ENCODE measurements at regions of chr2 and their contacts with region 1.

Region 1: DNA sequence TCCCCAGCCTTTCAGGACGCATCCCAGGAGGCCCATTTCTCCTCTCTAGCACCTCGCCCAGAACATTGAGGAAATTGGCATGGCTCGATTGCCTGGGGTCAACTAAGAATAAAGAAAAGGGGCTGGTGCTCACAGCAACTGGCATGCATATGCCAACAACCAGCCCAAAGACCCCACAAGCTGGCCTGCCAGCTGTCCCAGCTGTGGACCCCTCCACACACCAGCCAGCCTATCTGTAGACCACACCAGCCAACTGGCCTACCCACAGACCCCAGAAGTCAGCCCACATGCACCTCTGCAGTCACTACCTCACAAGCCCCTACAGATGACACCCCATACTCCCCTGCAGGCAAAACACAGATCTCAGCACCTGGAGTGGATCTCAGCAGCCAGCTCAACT is 123.8 kb upstream of the ID2 start:
- DNase-seq: no peak
- ATAC-seq: no peak
- H3K4me3 ChIP-seq: no peak overlapping the region
- H3K4me3 Mint-ChIP-seq: no peak overlapping the region
- H3K27ac ChIP-seq: no peak overlapping the region
- H3K27ac Mint-ChIP-seq: no peak overlapping the region
- H3K4me1 ChIP-seq: no peaks in the 10 kb centered on the region
- H3K4me1 Mint-ChIP-seq: no peaks in the 10 kb centered on the region
- H3K27me3 ChIP-seq: no peaks in the 10 kb centered on the region
- H3K27me3 Mint-ChIP-seq: no peaks in the 10 kb centered on the region
- CTCF ChIP-seq: no peak

Region 2: GRCh38 chr2:8573456-8574143 is 15.5 kb after region 1 on chr2:
- CTCF ChIA-PET with region 1: no interaction called
- POLR2A ChIA-PET with region 1: no interaction called
- intact Hi-C with region 1: no loop called
- DNase-seq: peak in 1 of 9 experiments; percentile 47
- ATAC-seq: no peak
- H3K4me3 ChIP-seq: no peak overlapping the region
- H3K4me3 Mint-ChIP-seq: no peak overlapping the region
- H3K27ac ChIP-seq: no peak overlapping the region
- H3K27ac Mint-ChIP-seq: no peak overlapping the region
- H3K4me1 ChIP-seq: peaks cover 26% of the 10 kb centered on the region
- H3K4me1 Mint-ChIP-seq: peaks cover 30% of the 10 kb centered on the region
- H3K27me3 ChIP-seq: no peaks in the 10 kb centered on the region
- H3K27me3 Mint-ChIP-seq: peaks cover 13% of the 10 kb centered on the region
- CTCF ChIP-seq: no peak

Region 3: DNA sequence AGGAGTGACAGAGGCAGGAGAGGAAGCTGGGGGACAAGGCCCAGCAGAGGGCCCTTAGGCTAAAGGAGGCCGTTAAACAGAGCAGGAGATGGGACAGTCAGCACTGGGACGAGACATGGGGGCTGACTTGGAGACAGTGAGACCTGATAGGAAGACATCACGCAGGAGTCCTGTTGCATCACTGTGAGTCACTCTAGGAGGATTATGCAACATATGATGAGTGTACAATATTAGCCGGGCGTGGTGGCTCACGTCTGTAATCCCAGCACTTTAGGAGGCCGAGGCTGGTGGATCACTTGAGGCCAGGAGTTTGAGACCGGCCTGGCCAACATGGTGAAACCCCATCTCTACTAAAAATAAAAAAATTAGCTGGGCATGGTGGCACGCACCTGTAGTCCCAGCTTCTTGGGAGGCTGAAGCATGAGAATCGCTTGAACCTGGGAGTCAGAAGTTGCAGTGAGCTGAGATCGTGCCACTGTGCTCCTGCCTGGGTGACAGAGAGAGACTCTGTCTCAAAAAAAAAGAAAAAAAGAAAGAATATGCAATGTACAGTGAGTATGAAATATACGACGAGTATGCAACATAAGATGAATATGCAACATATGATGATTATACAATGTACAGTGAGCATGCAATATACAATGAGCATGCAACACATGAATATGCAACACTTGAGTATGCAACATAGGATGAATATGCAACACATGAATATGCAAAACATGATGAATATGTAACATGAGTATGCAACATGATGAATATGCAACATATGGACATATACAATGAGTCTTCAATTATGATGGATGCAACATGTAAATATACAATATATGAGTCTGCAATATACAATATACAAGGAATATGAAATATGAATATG is 40.4 kb after region 1 on chr2:
- CTCF ChIA-PET with region 1: no interaction called
- POLR2A ChIA-PET with region 1: no interaction called
- intact Hi-C with region 1: loop called in 1 of 2 experiments (anchors 5 kb)
- DNase-seq: peak in 1 of 9 experiments; percentile 42
- ATAC-seq: no peak
- H3K4me3 ChIP-seq: no peak overlapping the region
- H3K4me3 Mint-ChIP-seq: no peak overlapping the region
- H3K27ac ChIP-seq: no peak overlapping the region
- H3K27ac Mint-ChIP-seq: no peak overlapping the region
- H3K4me1 ChIP-seq: no peaks in the 10 kb centered on the region
- H3K4me1 Mint-ChIP-seq: no peaks in the 10 kb centered on the region
- H3K27me3 ChIP-seq: peaks cover 0 to 2% of the 10 kb centered on the region in 2 experiments
- H3K27me3 Mint-ChIP-seq: no peaks in the 10 kb centered on the region
- CTCF ChIP-seq: no peak

Region 4: GRCh38 chr2:8851811-8852560 is 293.9 kb after region 1 on chr2:
- CTCF ChIA-PET with region 1: no interaction called
- POLR2A ChIA-PET with region 1: no interaction called
- intact Hi-C with region 1: no loop called
- DNase-seq: no peak
- ATAC-seq: no peak
- H3K4me3 ChIP-seq: no peak overlapping the region
- H3K4me3 Mint-ChIP-seq: no peak overlapping the region
- H3K27ac ChIP-seq: no peak overlapping the region
- H3K27ac Mint-ChIP-seq: no peak overlapping the region
- H3K4me1 ChIP-seq: no peaks in the 10 kb centered on the region
- H3K4me1 Mint-ChIP-seq: no peaks in the 10 kb centered on the region
- H3K27me3 ChIP-seq: no peaks in the 10 kb centered on the region
- H3K27me3 Mint-ChIP-seq: peaks cover 9% of the 10 kb centered on the region
- CTCF ChIP-seq: no peak

Region 5: DNA sequence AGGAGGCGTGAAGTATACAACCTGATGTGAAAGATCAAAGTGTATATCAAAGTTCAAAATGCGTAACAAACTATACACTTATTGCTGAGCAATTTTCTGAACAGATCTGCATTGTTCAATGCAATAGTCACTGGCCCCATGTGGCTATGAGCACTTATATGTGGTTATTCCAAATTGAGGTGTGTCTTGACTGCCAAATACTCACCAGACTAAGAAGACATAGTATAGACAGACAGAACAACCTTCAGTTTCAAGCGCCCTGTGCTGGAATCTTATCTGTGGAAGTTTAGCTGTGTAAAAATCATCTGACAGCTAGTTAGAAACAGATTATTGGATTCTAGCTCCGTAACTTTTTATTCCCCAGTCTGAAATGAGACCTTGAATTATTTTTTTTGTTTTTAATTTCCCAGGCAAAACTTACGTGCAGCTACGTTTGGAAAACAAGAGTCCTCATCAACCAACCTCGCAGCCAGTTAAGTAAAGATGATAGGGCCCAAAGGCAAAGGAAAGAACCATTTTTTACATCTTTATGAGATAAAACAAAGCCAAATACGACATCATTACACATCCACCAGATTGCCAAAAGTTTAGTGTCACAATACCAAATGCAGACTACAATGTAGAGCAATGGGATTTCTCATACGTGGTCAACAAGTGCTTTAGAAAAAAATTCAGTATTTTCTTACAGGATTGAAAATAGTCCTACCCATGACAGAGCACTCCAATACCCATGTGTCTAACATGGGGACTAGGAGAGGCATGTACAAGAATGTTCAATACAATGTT is 408.2 kb after region 1 on chr2:
- CTCF ChIA-PET with region 1: no interaction called
- POLR2A ChIA-PET with region 1: no interaction called
- intact Hi-C with region 1: no loop called
- DNase-seq: no peak
- ATAC-seq: no peak
- H3K4me3 ChIP-seq: no peak overlapping the region
- H3K4me3 Mint-ChIP-seq: no peak overlapping the region
- H3K27ac ChIP-seq: no peak overlapping the region
- H3K27ac Mint-ChIP-seq: no peak overlapping the region
- H3K4me1 ChIP-seq: no peaks in the 10 kb centered on the region
- H3K4me1 Mint-ChIP-seq: no peaks in the 10 kb centered on the region
- H3K27me3 ChIP-seq: no peaks in the 10 kb centered on the region
- H3K27me3 Mint-ChIP-seq: peaks cover 9% of the 10 kb centered on the region
- CTCF ChIP-seq: no peak

Region 6: DNA sequence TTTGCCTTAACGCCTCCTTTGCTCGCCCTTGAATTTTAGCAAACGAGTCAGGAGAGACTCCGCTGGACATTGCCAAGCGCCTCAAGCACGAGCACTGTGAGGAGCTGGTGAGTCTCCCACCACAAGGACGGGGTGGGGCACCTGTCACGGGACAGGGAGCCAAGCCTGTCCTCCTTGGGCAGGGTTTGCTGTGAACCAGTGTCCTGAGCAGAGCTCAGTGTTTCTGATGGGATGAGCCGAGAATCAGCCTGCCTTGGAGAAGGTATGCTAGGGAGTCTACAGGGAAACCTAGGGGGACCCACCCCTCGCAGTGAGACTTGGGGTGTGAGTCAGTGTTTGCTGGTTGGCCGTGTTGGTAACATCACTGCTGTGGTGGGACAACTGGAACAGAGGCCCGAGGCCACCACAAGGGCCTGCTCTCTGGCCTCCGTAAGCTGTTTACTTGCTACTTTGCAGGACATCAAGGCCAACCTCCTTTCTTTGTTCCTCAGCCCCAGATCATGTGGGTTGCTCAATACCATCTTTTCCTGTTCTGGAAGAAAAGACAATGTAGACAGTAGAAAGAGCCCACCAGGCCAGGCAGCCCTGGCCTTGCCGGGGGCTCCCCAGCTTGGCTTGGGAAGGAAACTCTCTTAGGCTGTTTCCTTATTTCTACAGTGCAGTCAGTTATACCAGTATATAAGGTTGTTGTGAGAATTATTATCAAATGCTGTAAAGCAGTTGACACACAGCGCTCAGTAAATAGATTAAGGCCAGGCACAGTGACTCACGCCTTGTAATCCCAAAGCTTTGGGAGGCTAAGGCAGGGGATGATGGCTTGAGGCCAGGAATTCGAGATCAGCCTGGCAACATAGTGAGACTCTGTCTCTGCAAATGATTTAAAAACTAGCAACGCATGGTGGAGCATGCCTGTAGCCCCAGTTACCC is 822.9 kb after region 1 on chr2:
- CTCF ChIA-PET with region 1: no interaction called
- POLR2A ChIA-PET with region 1: no interaction called
- intact Hi-C with region 1: no loop called
- DNase-seq: no peak
- ATAC-seq: no peak
- H3K4me3 ChIP-seq: no peak overlapping the region
- H3K4me3 Mint-ChIP-seq: no peak overlapping the region
- H3K27ac ChIP-seq: no peak overlapping the region
- H3K27ac Mint-ChIP-seq: no peak overlapping the region
- H3K4me1 ChIP-seq: no peaks in the 10 kb centered on the region
- H3K4me1 Mint-ChIP-seq: no peaks in the 10 kb centered on the region
- H3K27me3 ChIP-seq: no peaks in the 10 kb centered on the region
- H3K27me3 Mint-ChIP-seq: peaks cover 2% of the 10 kb centered on the region
- CTCF ChIP-seq: no peak